Activated CD8-positive, alpha-beta T cell treated with anti-CD3 and anti-CD28 coated beads for 36 hours (primary cell): ENCODE measurements at regions of chr20 and their contacts with region 1.

Region 1: DNA sequence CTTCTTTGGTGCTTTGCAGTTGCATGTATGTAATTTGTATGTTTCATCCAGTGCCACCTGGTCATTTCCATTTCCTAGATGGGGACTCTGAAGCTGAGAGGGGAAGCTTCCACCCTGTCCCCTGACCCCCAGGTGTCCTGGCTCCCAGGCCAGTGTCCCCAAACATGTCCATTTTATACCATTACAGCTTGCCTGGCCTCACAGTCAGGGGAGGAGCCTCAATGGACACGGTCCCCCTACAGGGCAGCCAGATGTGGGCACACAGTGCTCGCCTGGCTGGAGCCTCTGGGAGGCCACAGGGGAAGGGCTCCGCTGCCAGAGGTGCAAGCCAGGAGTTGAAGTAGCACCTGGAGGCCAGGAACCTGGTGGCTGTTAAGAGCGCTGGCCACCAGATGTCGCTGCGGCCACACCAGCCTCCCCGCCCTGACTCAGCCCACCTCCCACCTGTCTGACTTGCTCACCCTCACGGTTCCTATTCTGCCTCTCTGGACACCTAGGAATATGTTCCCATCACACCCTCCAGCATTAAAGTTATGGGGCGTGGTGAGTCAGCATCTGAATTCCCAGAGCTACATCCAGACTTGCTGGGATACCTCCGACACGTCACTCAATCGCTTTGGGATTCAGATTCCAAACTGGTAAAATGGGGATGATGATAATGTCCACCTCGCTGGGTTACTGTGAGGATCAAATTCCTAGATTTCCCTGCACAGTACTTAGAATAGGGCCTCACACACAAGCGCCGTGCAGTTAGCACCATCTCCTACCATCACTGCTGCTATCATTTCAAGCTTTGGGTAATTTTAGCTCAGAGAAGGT is 107.4 kb downstream of the SULF2 start:
- DNase-seq: peak; percentile 79
- ATAC-seq: peak; percentile 86
- H3K4me3 Mint-ChIP-seq: no peak overlapping the region
- H3K27ac Mint-ChIP-seq: no peak overlapping the region
- H3K4me1 Mint-ChIP-seq: no peaks in the 10 kb centered on the region
- H3K27me3 Mint-ChIP-seq: no peaks in the 10 kb centered on the region
- CTCF ChIP-seq: peak; percentile 88

Region 2: DNA sequence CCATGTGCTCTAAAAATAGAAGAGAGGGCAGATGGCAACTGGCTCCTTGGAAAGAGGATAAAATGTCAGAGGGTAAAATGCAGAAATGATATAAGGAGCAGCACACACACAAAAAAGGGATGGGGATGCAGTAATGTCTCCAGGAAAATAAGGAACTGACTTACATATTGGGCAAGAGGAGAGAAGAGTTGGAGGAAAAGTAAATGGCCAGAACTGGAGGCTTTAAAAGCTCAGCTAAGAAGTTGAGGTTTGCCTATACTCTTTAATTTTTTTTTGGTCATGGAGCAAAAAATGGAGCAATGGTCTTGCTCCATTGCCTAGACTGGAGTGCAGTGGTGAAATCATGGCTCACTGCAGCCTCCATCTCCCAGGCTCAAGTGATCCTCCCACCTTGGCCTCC is 13.8 kb after region 1 on chr20:
- CTCF ChIA-PET with region 1: interaction called, 25 read pairs
- POLR2A ChIA-PET with region 1: no interaction called
- intact Hi-C with region 1: no loop called
- DNase-seq: no peak
- ATAC-seq: no peak
- H3K4me3 Mint-ChIP-seq: no peak overlapping the region
- H3K27ac Mint-ChIP-seq: no peak overlapping the region
- H3K4me1 Mint-ChIP-seq: peaks cover 5% of the 10 kb centered on the region
- H3K27me3 Mint-ChIP-seq: no peaks in the 10 kb centered on the region
- CTCF ChIP-seq: no peak

Region 3: DNA sequence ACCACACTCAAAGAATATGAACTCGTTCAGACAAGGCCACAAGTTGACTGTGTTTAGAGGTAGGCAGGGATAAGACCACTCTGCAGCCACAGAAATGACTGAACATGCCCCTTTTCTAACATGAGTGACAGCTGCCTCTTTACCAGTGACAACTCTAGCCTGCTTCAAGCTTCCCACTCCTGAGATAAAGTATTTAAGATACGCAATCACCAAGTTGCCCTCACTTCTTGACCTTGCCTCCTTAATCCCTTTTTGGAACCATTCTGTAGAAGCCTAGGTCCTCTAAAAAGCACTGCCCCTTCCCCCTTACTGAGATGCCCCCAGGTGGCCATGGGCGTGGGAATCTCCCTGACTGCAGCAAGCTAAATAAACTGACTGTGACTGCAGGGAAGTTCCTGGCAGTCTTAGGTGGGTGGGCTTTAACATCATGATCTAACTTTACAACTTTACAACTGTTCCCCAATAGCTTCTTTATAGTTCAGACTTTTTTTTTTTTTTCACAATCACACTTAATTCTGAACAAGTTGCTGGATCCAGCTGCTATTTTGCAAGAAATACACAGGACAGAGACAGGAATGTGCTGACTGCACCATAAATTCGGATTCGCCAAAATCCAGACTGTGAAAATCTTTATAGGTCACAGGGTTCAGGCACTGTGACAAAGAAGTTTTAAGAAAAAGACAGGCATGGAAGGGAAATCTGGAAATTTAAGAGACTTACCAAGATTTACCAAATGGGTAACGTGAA is 451.5 kb after region 1 on chr20:
- CTCF ChIA-PET with region 1: no interaction called
- POLR2A ChIA-PET with region 1: no interaction called
- intact Hi-C with region 1: loop called (anchors 10 kb)
- DNase-seq: no peak
- ATAC-seq: no peak
- H3K4me3 Mint-ChIP-seq: no peak overlapping the region
- H3K27ac Mint-ChIP-seq: no peak overlapping the region
- H3K4me1 Mint-ChIP-seq: no peaks in the 10 kb centered on the region
- H3K27me3 Mint-ChIP-seq: peaks cover 5% of the 10 kb centered on the region
- CTCF ChIP-seq: no peak